Activated naive CD8-positive, alpha-beta T cell treated with anti-CD3 and anti-CD28 coated beads, Interleukin-2, amount 10 ng/mL, durations not matched to agents 7 days and 5 days (primary cell): ENCODE measurements at regions of chr22 and their contacts with region 1.

Region 1: DNA sequence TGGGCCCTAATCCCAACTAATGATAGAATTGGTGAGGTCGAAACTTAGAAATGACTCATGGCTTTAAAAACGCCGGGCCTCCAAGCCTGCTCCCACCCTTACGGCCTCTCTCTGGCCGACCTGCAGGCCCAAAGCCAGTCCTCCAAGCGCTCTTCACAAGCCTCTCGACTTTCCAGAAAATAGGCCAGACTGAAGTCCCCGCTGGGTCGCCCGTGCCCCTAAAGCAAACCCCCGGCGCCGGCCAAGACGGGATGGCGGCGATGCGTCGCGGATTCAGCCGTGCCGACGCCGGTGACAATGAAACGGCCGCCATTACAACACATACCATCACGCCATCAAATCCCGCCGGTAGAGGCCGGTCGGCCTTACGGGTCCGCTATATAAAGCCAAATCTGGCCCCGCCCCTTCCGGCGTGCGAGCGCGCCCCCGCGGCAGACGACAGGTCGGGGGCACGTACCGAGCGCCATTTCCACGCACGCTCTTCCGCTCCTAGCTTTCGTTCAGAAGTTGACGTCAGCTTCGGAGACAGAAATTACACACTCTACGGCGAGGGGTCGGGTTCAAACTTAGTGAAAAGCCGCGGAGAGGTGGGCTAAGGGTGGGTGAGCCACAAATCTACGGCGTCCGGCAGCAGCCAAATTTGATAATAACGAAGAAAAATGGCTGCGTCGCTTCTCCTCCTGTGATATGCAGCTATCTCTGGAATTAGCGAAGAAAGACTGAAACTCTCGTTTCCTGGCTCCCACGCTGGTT is at the start of gene RPL3:
- DNase-seq: peak; percentile 99
- ATAC-seq: peak; percentile 86
- H3K4me3 Mint-ChIP-seq: peak within 1 kb of the TSS; percentile 100
- H3K27ac Mint-ChIP-seq: peak within 1 kb of the TSS; percentile 99
- H3K4me1 Mint-ChIP-seq: peaks cover 44% of the 10 kb centered on the region
- H3K27me3 Mint-ChIP-seq: no peaks in the 10 kb centered on the region
- total RNA-seq, gene RPL3: 1,927 to 2,015 TPM

Region 2: GRCh38 chr22:38872172-38872830 is 447.1 kb before region 1 on chr22 and contains the start of gene CBX6:
- POLR2A ChIA-PET with region 1: interaction called, 12 read pairs
- DNase-seq: peak; percentile 99
- ATAC-seq: peak; percentile 76
- H3K4me3 Mint-ChIP-seq: peak within 1 kb of the TSS; percentile 90
- H3K27ac Mint-ChIP-seq: peak within 1 kb of the TSS; percentile 88
- H3K4me1 Mint-ChIP-seq: peaks cover 34% of the 10 kb centered on the region
- H3K27me3 Mint-ChIP-seq: peaks cover 20% of the 10 kb centered on the region
- total RNA-seq, gene CBX6: 66.0 to 66.4 TPM

Region 3: GRCh38 chr22:39152511-39153219 is 166.8 kb before region 1 on chr22 and contains the start of gene CBX7:
- POLR2A ChIA-PET with region 1: interaction called, 23 read pairs
- DNase-seq: peak; percentile 95
- ATAC-seq: peak; percentile 90
- H3K4me3 Mint-ChIP-seq: peak within 1 kb of the TSS; percentile 87
- H3K27ac Mint-ChIP-seq: peak within 1 kb of the TSS; percentile 81
- H3K4me1 Mint-ChIP-seq: peaks cover 9% of the 10 kb centered on the region
- H3K27me3 Mint-ChIP-seq: peaks cover 29% of the 10 kb centered on the region
- total RNA-seq, gene CBX7: 64.2 to 71.3 TPM

Region 4: DNA sequence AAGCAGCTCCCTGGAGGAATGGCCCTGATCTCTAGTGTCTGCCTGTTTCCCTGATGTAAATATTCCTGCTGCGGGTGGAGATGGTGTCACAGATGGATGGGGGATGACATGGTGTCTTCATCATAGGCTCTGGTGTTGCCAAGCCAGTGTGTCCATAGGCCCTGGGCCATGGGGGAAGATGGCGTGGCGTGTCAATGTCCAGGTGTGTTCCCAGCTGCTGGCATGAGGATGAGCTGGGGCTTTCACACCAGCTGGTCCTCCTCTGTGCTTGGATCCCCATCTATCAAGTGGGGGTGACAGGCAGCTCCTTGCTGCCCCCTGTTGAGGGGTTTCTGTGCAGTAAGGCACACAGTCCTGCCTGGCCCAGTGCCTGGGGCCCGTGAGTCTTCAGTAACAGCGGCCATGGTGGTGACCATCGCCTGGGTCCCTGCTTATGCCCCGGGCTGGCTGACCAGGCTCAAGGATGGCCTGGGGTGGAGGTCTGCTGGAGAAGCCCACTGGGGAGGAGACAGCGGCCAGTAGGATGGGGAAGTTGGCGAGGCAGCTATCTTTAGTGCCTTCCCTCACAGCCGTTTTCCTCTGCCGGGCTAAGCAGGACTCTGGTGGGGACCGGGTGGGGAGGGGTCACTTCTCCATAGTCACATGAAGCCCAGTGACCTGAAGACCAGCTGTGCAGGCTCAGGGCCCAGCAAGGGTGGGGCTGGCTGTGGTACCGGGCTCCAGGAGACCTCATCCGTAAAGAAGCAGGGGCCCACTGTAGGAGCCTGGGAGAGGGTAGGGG is 12.7 kb before region 1 on chr22:
- POLR2A ChIA-PET with region 1: interaction called, 14 read pairs
- DNase-seq: peak; percentile 62
- ATAC-seq: peak; percentile 63
- H3K4me3 Mint-ChIP-seq: no peak overlapping the region
- H3K27ac Mint-ChIP-seq: no peak overlapping the region
- H3K4me1 Mint-ChIP-seq: peaks cover 6% of the 10 kb centered on the region
- H3K27me3 Mint-ChIP-seq: no peaks in the 10 kb centered on the region

Region 5: DNA sequence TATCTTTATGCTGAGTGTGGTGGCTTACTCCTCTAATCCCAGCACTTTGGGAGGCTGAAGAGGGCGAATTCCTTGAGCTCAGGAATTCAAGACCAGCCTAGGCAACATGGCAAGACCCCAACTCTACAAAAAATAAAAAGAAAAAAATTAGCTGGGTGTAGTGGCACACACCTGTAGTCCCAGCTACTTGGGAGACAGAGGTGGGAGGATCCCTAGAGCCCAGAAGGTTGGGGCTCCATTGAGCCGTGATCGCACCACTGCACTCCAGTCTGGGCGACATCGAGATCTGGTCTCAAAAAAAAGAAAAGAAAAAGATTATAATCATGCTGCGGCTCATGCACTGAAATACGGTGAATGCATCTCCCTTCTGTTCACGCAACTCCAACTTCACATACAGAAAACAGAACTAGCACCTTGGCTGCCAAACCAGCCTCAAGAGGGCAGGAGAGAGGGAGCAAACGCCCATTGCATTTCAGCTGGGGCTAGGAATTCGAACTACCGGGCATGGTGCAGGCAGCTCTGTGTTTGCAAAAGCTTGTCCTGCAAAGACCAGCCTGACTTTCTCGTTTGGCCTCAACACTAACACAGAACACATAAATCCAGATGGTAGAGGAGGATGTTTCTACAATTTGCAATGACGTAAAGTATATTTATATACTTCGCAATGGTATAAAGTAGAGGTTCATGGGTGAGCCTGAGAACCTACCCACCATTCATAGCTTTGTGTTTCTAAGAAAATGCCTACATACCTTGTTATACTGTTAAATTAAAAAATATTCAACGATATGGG is 24.0 kb after region 1 on chr22:
- POLR2A ChIA-PET with region 1: interaction called, 39 read pairs
- DNase-seq: peak; percentile 52
- ATAC-seq: peak; percentile 96
- H3K4me3 Mint-ChIP-seq: no peak overlapping the region
- H3K27ac Mint-ChIP-seq: no peak overlapping the region
- H3K4me1 Mint-ChIP-seq: peaks cover 4% of the 10 kb centered on the region
- H3K27me3 Mint-ChIP-seq: peaks cover 9% of the 10 kb centered on the region

Region 6: DNA sequence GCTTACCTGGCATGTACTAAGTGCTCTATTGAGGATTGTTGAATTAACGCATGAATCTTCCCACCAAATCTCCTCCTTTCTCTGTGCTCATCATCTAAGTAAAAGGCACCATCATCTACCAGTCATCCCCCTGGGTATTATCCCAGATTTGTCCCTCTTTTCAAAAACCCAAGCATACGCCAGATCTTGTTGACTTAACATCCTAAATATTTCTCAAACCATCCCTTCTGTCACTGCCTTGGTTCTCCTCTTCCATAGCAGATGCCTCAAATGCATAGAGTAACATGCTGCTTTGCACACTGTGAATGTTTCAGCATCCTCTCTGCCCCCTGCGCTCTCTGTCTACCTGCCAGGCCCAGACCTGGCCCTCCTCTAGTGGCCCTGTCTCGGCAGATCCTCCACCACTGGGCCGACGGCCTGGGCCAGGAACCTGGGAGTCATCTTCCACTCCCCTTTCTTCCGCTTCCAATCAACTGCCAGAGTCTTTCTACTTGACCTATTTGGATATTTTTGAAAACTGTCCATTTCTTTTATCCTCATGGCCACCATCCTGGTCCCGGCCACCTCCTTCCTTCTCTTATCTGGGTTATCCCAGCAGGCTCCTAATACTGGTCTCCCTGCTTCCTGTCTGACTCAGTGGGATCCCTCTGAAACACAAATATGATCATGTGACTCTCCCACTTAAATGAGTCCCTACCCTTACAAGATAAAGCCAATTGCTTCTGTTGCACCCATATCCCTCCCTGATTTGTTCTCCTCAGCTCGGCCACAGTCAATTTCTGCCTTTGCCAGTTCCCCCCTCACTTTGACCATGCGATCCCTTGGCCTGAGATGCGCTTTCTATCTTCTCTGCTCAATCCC is 76.7 kb after region 1 on chr22:
- POLR2A ChIA-PET with region 1: interaction called, 13 read pairs
- DNase-seq: no peak
- ATAC-seq: no peak
- H3K4me3 Mint-ChIP-seq: no peak overlapping the region
- H3K27ac Mint-ChIP-seq: no peak overlapping the region
- H3K4me1 Mint-ChIP-seq: peaks cover 5% of the 10 kb centered on the region
- H3K27me3 Mint-ChIP-seq: no peaks in the 10 kb centered on the region

Region 7: GRCh38 chr22:39520054-39520891 is 200.8 kb after region 1 on chr22 and contains the start of gene ATF4:
- POLR2A ChIA-PET with region 1: interaction called, 80 read pairs
- DNase-seq: peak; percentile 92
- ATAC-seq: peak; percentile 94
- H3K4me3 Mint-ChIP-seq: peak within 1 kb of the TSS; percentile 96
- H3K27ac Mint-ChIP-seq: peak within 1 kb of the TSS; percentile 99
- H3K4me1 Mint-ChIP-seq: peaks cover 58% of the 10 kb centered on the region
- H3K27me3 Mint-ChIP-seq: no peaks in the 10 kb centered on the region
- total RNA-seq, gene ATF4: 413 to 424 TPM